ENCODE measurements at regions of chr2 and their contacts with region 1.

Region 1: DNA sequence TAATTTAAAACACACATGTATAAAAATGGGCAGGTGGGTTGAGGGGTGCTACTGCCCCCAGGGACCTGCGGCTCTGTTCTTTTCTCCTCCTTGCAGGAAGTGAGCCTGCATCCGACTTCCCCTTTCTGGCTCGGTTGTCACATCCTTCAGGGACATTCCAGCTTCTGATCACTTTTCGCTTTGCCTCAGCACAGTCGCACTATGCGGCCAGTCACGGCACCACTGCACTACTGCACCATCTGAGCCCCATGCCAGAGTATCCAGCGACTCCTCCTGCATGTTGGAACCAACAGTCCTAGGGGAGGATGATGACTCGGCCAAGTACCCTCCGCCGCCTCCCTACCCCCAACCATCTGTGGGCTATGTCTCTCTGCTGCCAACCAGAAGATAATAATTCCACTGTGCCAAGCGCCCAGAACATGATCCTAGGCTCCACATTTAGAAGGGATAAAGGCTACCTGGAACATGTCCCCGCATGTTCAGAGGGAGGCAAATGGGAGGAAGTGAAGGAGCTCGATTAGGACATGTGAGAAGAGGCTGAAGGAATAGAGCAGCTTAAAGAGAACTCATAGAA is 17.6 kb downstream of the CDC42EP3 start:
- DNase-seq: peak; percentile 82
- H3K4me3 ChIP-seq: peak overlapping the region; percentile 64
- H3K27ac ChIP-seq: peak overlapping the region; percentile 94
- H3K4me1 ChIP-seq: peaks cover 85% of the 10 kb centered on the region
- CTCF ChIP-seq: no peak

Region 2: DNA sequence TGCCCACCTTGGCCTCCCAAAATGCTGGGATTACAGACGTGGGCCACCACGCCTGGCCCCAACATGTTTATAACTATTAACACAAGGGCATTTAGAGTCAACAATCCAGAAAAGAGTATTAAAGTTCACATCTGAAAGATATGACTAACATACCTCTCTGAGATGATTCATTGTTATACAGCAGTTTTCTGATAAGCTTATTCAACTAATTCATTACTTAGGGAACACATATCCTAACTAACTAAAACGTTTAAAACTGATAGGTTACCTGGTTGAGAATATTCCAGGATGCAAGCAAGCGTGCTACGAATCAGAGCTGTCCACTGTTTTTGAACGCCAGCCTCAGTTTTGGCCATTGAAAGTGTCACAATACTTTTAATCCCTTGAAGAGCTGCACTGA is 653.6 kb before region 1 on chr2:
- CTCF ChIA-PET with region 1: no interaction called
- POLR2A ChIA-PET with region 1: no interaction called
- intact Hi-C with region 1: no loop called
- DNase-seq: no peak
- H3K4me3 ChIP-seq: no peak overlapping the region
- H3K27ac ChIP-seq: no peak overlapping the region
- H3K4me1 ChIP-seq: peaks cover 3% of the 10 kb centered on the region
- CTCF ChIP-seq: no peak

Region 3: GRCh38 chr2:37083873-37084794 is 569.8 kb before region 1 on chr2 and contains the starts of genes GPATCH11 and HEATR5B:
- CTCF ChIA-PET with region 1: interaction called, 4 read pairs
- POLR2A ChIA-PET with region 1: interaction called, 3 read pairs
- intact Hi-C with region 1: loop called (anchors 5 kb)
- DNase-seq: peak; percentile 97
- H3K4me3 ChIP-seq: peak within 1 kb of the TSS; percentile 80
- H3K27ac ChIP-seq: peak within 1 kb of the TSS; percentile 52
- H3K4me1 ChIP-seq: peaks cover 62% of the 10 kb centered on the region
- CTCF ChIP-seq: no peak
- total RNA-seq, gene GPATCH11: 11.6 and 21.2 TPM in 2 replicates
- total RNA-seq, gene HEATR5B: 23.8 TPM in 2 replicates

Region 4: GRCh38 chr2:37337642-37338310 is 316.1 kb before region 1 on chr2:
- CTCF ChIA-PET with region 1: interaction called, 3 read pairs
- POLR2A ChIA-PET with region 1: interaction called, 5 read pairs
- intact Hi-C with region 1: loop called (anchors 5 kb)
- DNase-seq: peak; percentile 35
- H3K4me3 ChIP-seq: peak overlapping the region; percentile 49
- H3K27ac ChIP-seq: peak overlapping the region; percentile 74
- H3K4me1 ChIP-seq: peaks cover 76% of the 10 kb centered on the region
- CTCF ChIP-seq: no peak

Region 5: GRCh38 chr2:37500031-37500430 is 153.9 kb before region 1 on chr2:
- CTCF ChIA-PET with region 1: no interaction called
- POLR2A ChIA-PET with region 1: no interaction called
- intact Hi-C with region 1: no loop called
- DNase-seq: no peak
- H3K4me3 ChIP-seq: no peak overlapping the region
- H3K27ac ChIP-seq: no peak overlapping the region
- H3K4me1 ChIP-seq: no peaks in the 10 kb centered on the region
- CTCF ChIP-seq: no peak

Region 6: DNA sequence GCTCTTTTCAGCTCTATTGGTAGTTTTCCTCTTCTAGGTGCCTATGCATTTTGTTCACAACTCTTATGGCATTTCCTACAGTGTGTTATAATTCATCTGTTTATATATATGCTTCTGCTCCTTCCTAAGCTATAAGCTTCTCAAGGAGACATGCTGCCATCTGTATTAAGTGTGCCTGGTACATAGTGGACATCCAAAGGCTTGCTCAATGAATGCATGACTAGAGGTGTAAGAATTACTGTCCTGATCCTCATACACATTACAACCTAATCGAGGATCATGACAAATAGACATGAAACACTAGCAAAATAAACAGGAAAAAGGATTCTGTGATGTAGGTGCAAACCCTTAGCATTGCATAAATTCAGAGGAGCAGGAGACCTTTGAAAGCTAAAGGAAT is 32.7 kb before region 1 on chr2:
- CTCF ChIA-PET with region 1: interaction called, 6 read pairs
- POLR2A ChIA-PET with region 1: interaction called, 10 read pairs
- intact Hi-C with region 1: no loop called
- DNase-seq: no peak
- H3K4me3 ChIP-seq: no peak overlapping the region
- H3K27ac ChIP-seq: no peak overlapping the region
- H3K4me1 ChIP-seq: peaks cover 12% of the 10 kb centered on the region
- CTCF ChIP-seq: no peak

Region 7: DNA sequence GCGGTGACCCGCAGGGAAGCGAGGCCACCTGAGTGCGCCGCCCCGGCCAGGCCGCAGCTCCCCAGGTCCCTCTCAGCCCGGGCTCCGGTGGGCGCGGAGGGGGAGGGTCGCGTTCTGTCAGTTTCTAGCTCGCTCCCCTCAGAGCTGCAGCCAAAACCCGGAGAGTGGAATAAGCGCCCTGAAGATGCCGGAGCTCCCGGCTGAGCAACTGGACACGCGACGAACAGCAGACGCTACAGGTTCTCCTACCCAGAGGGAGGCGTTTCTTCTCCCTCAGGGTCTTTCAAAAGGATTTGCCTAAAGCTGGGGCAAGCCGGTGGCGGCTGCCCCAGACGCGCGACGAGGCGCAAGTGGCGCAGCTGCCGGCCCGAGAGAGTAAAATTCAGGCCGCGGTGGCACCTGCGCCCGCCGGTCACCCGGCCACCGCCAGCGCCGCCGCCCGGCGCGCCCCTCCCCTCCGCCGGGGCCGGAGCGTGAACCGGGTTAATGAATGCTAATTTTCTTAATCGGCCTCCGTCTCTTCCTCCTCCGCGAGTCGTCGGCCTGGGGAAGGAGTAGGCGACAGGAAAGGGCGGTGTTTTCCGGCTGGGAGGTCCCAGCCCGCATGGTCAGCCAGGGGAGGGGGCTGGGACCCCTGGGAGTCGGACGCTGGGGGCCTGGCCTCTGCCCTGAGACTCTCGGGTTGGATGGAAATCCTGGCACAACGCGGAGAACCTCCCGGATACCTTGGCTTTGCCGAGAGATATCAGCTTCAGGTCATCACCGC is 18.4 kb after region 1 on chr2:
- CTCF ChIA-PET with region 1: interaction called, 4 read pairs
- POLR2A ChIA-PET with region 1: interaction called, 30 read pairs
- intact Hi-C with region 1: loop called (anchors 1 kb)
- DNase-seq: peak; percentile 88
- H3K4me3 ChIP-seq: peak overlapping the region; percentile 94
- H3K27ac ChIP-seq: peak overlapping the region; percentile 59
- H3K4me1 ChIP-seq: peaks cover 44% of the 10 kb centered on the region
- CTCF ChIP-seq: no peak